ENCODE measurements at regions of chr14 and their contacts with region 1.

Region 1: DNA sequence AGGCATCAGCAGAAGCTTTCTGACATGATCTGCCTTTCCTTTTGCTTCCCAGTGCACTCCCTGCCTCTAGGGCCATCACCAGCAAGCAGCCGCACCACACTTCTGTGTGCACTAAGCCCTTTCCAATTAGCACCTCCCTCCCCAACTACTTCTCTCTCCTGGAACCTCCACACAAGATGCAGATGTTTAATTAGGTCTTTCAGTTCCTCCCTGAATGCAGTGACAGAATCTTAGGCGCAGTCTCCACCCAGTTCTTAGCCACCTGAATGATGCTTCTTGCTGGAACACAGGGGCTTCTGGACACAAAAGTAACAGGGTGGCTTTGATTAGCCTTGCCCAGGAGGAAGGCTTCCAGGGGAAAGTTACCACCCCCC is 32.9 kb downstream of the NIN start:
- DNase-seq: no peak
- H3K4me3 ChIP-seq: no peak overlapping the region
- H3K27me3 ChIP-seq: no peaks in the 10 kb centered on the region
- CTCF ChIP-seq: no peak

Region 2: DNA sequence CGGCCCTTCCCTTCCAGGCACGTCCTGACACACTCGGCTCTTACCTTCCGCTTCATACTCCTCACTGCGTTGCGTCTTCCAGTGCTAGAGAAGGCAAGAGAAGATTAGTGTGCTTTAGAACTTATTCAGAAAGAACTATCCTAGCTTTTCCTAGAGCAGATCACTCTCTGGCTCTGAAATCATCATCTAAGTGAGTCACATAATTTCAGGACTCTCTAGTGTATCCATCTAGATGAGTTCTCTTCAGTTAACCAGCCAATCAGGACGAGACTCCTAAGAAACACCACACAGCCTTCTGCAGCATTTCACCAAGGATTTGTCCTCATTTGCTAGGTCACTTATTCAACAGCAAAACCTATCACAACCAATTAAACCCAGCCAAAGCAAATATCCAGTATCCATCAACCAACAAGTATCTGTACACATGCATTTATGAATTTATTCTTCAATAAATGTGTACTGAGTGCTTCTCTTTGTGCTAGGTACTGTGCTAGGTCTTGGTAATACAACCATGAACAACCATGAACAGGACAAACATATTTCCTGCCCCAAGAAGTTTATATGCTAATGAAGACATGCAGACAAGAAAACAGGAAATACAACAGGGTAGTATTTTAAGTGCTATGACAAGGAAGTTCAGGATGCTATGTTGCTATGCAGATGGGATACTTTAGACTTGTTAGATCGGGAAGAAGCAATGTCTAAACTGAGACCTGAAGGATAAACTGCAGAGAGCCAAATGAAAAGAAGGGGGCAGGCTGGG is 19.1 kb before region 1 on chr14:
- CTCF ChIA-PET with region 1: interaction called, 11 read pairs
- POLR2A ChIA-PET with region 1: no interaction called
- DNase-seq: no peak
- H3K4me3 ChIP-seq: no peak overlapping the region
- H3K27me3 ChIP-seq: no peaks in the 10 kb centered on the region
- CTCF ChIP-seq: no peak

Region 3: DNA sequence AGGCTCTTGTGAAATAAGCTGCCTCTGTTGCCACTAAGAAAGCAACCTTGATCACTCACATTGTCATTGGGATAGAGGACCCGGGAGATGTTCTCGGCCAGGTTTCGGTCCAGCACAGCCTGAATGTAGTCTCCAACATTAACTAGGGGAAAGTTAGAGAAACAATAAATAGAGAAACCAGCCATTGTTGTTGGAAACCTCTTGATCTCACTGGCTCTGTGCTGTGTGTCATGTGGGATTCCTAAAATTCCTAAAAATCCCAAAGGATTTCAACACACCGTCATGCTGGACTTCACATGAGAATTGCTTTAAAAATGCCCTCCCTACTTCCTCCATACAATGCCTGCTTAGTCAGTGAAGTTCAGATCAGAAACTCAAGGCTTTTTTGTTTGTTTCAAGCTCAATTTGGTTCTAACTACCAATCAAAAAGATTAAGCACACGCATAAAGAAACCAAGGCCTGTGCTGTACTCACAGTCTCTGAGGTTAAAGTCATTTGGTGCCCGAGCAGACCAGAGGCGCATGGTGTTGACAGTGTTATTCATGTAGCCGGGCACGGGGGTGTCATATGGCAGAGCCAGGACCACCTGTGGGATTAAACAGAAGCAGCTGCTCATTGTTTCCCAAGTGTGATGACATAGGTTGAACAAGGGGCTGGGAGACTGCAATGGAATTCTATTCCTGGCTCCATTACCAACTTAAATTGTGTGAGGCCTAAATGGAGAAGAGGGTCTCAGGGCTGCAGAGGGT is 122.6 kb after region 1 on chr14:
- CTCF ChIA-PET with region 1: no interaction called
- POLR2A ChIA-PET with region 1: no interaction called
- DNase-seq: peak; percentile 77
- H3K4me3 ChIP-seq: no peak overlapping the region
- H3K27me3 ChIP-seq: no peaks in the 10 kb centered on the region
- CTCF ChIP-seq: no peak

Region 4: GRCh38 chr14:51759950-51760349 is 961.9 kb after region 1 on chr14:
- CTCF ChIA-PET with region 1: no interaction called
- POLR2A ChIA-PET with region 1: no interaction called
- DNase-seq: no peak
- H3K4me3 ChIP-seq: no peak overlapping the region
- H3K27me3 ChIP-seq: no peaks in the 10 kb centered on the region
- CTCF ChIP-seq: no peak

Measured in BJ (cell line).